Calu3 (cell line): ENCODE measurements at regions of chr6 and their contacts with region 1.

Region 1: DNA sequence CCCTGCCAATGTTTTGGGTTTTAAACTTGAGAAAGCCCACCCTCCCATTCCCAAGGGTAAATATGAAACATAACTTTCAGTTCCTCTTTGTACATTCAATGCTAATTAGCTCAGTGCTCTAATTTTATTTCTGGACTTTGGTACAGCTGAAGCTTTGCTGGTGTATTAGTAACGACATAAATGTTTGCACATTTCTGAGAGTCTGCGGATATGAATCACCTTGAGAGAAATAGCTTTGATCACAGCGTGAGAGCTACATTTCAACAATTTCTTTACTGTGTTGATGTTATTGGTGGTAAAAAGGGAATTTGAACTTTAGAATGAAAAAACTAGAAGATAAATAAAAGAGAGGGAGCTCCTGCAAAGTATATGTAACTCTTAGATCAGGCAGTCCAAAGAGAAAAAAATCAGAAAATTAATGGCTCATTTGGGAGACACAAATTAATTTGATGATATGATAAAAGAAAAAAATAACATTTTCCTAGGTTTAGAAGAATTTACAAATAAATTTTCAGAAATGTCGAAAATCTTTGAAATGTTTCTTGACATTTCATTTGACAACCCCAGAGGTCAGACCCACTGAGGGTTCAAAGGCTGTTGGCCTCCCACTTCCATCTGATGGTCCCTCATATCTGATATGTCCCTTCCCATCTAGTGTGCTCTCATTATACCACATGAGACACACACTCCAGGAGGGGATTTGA is 38.5 kb upstream of the CAP2 start:
- DNase-seq: peak; percentile 2
- H3K4me3 Mint-ChIP-seq: peak overlapping the region; percentile 12
- H3K27ac Mint-ChIP-seq: peak overlapping the region; percentile 25
- H3K4me1 Mint-ChIP-seq: peaks cover 12% of the 10 kb centered on the region
- H3K27me3 Mint-ChIP-seq: no peaks in the 10 kb centered on the region
- CTCF ChIP-seq: no peak

Region 2: DNA sequence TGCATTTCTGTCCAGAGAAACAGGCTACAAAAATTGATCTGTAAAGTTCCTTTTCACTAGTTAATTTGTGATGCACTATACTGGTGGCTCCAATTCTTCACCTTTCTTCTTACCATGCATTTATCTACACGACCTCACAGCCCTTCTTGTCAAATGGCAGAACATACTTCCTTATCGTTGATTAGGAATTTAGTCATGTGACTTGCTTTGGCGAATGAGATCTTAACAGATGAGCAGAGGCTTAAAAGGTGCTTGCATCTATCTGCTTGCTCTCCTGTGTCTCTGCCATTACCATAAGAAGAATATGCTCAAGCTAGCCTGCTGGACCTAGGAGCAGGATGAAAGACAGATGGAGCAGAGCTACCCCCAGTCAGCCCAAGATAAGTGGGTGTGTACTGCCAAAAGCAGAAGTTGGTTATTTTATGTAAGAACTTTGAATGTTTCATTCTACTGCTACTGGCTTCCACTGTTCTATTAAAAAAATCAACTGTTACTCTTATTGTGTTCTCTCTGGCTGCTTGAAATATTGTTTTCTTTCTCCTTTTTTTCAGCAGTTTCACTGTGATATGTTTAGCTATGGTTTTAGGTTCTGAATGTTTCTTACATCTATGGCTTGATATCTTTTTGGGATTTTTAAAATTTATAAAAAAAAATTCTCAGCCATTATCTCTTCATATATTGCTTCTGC is 113.9 kb before region 1 on chr6:
- CTCF ChIA-PET with region 1: no interaction called
- intact Hi-C with region 1: no loop called
- DNase-seq: no peak
- H3K4me3 Mint-ChIP-seq: no peak overlapping the region
- H3K27ac Mint-ChIP-seq: no peak overlapping the region
- H3K4me1 Mint-ChIP-seq: no peaks in the 10 kb centered on the region
- H3K27me3 Mint-ChIP-seq: peaks cover 14% of the 10 kb centered on the region
- CTCF ChIP-seq: no peak

Region 3: GRCh38 chr6:17281100-17281494 is 73.8 kb before region 1 on chr6 and contains the start of gene RBM24:
- CTCF ChIA-PET with region 1: no interaction called
- intact Hi-C with region 1: loop called (anchors 5 kb)
- DNase-seq: peak; percentile 76
- H3K4me3 Mint-ChIP-seq: peak within 1 kb of the TSS; percentile 84
- H3K27ac Mint-ChIP-seq: no peak within 1 kb of the TSS
- H3K4me1 Mint-ChIP-seq: peaks cover 13% of the 10 kb centered on the region
- H3K27me3 Mint-ChIP-seq: no peaks in the 10 kb centered on the region
- CTCF ChIP-seq: peak; percentile 20
- total RNA-seq, gene RBM24: 0.47 and 1.1 TPM in 2 replicates

Region 4: DNA sequence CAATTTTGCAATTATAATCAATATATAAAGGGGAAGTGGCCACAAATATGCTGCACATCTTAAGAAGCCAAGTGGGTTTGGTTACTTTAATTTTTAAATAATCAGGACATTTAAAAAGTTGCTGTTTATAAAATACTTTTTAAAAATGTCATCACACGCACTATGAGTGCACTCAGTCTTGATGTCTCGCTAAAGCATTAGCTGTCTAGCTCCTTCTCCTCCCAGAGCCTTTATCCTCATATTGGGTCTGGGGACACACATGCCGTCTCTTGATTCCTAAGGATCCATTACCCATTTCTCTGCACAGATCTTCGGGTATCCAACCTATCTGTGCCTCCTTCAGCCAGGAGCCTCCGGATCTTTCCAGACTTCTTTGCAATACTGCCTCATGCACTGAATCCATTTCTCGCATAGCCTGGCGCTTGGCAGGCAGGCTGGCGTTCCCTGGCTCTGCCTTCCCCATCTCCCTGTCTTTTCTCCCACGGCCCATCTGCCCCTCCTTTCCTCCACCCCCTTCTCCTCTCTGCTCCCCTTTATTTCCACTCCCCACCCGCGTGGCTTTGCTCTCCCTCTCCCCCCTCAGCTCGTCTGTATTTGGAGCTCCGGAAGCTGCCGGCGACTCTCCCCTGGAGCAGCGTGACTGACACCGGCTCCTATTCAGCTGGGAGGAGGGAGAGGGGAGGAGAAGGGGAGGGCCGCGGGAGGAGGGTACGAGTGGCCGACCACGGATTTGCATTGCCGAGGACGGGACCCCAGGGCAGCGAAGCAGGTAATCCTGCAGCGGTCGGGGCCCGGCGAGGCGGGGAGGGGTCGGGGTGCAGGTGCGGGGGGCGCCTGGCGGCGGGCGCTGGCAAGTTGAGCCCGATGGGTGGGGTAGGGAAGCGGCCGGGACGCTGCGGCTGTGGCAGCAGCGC is 38.4 kb after region 1 on chr6 and contains the start of gene CAP2:
- CTCF ChIA-PET with region 1: no interaction called
- intact Hi-C with region 1: loop called (anchors 2 kb)
- DNase-seq: peak; percentile 49
- H3K4me3 Mint-ChIP-seq: peak within 1 kb of the TSS; percentile 72
- H3K27ac Mint-ChIP-seq: peak within 1 kb of the TSS; percentile 69
- H3K4me1 Mint-ChIP-seq: no peaks in the 10 kb centered on the region
- H3K27me3 Mint-ChIP-seq: no peaks in the 10 kb centered on the region
- CTCF ChIP-seq: no peak
- total RNA-seq, gene CAP2: 14.6 and 15.7 TPM in 2 replicates

Region 5: DNA sequence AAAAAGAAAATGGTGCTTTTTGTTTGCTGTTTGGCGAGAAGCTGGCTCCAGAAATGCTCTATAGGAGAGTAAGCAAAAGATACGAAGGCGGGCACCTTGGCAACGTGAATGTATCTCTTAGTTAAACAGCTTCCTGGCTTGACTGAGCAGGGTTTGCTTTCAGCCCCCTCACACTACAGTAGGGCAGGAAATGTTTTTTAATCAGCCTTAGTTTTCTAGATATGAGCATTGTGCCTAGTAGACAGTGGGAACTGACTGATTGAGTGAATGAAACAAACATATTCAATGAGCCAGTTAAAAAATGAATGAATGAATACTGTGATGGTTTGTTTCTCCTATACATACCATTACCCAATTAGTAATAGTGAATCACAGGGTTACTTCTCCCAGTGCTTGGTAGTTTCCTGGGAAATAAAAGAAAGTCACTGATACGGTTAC is 58.5 kb after region 1 on chr6:
- CTCF ChIA-PET with region 1: no interaction called
- intact Hi-C with region 1: no loop called
- DNase-seq: no peak
- H3K4me3 Mint-ChIP-seq: no peak overlapping the region
- H3K27ac Mint-ChIP-seq: no peak overlapping the region
- H3K4me1 Mint-ChIP-seq: peaks cover 10% of the 10 kb centered on the region
- H3K27me3 Mint-ChIP-seq: no peaks in the 10 kb centered on the region
- CTCF ChIP-seq: no peak